Calu3 (cell line): ENCODE measurements at regions of chr6 and their contacts with region 1.

Region 1: DNA sequence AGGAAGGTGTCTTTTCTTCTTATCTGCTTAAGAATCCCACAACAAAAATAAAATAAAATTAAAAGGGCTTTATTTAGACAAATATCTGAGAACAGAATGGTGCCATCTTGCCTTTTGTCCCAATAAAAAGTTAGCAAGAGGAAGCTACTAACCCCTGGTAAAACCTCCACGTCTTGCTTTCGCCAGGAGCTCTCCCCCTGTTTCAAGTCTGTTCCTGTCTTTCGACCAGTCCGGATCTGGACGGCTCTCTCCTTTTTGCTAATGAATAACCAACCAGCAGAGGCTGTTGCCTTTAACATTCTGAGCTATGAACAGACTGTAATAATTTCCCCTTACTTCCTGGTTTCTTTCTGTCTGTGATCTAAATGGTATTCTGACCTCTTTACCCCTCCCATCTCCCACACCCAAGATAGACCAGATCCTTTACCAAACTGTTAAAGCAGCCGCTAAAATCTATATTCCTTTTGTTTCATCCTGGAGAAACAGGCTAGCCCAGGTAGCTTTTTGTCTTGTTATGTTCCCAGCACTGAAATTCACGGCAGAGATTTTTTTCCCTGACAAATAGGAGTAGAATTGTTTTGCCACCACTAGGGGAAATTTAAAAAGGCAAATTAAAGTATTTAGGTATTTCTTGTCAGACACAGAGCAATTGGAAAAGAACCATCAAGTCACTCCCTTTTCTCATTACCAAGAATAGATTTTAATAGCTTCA is at the start of gene FRK:
- DNase-seq: peak; percentile 77
- H3K4me3 Mint-ChIP-seq: peak within 1 kb of the TSS; percentile 72
- H3K27ac Mint-ChIP-seq: peak within 1 kb of the TSS; percentile 89
- H3K4me1 Mint-ChIP-seq: peaks cover 13% of the 10 kb centered on the region
- H3K27me3 Mint-ChIP-seq: no peaks in the 10 kb centered on the region
- CTCF ChIP-seq: no peak
- total RNA-seq, gene FRK: 21.1 and 21.2 TPM in 2 replicates

Region 2: GRCh38 chr6:116010790-116011401 is 49.8 kb before region 1 on chr6:
- CTCF ChIA-PET with region 1: interaction called, 25 read pairs
- intact Hi-C with region 1: loop called (anchors 1 kb)
- DNase-seq: peak; percentile 78
- H3K4me3 Mint-ChIP-seq: peak overlapping the region; percentile 48
- H3K27ac Mint-ChIP-seq: peak overlapping the region; percentile 98
- H3K4me1 Mint-ChIP-seq: peaks cover 63% of the 10 kb centered on the region
- H3K27me3 Mint-ChIP-seq: no peaks in the 10 kb centered on the region
- CTCF ChIP-seq: peak; percentile 77

Region 3: DNA sequence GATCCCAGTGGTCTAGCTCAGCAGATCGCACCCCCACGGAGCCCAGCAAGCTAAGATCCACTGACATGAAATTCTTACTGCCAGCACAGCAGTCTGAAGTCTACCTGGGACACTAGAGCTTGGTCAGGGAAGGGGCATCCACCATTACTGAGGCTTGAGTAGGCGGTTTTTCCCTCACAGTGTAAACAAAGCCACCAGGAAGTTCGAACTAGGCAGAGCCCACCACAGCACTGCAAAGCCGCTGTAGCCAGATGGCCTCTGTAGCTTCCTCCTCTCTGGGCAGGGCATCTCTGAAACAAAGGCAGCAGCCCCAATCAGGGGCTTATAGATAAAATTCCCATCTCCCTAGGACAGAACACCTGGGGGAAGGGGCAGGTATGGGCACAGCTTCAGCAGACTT is 18.8 kb before region 1 on chr6:
- CTCF ChIA-PET with region 1: interaction called, 11 read pairs
- intact Hi-C with region 1: loop called (anchors 2 kb)
- DNase-seq: no peak
- H3K4me3 Mint-ChIP-seq: peak overlapping the region; percentile 25
- H3K27ac Mint-ChIP-seq: peak overlapping the region; percentile 37
- H3K4me1 Mint-ChIP-seq: peaks cover 52% of the 10 kb centered on the region
- H3K27me3 Mint-ChIP-seq: no peaks in the 10 kb centered on the region
- CTCF ChIP-seq: no peak

Region 4: DNA sequence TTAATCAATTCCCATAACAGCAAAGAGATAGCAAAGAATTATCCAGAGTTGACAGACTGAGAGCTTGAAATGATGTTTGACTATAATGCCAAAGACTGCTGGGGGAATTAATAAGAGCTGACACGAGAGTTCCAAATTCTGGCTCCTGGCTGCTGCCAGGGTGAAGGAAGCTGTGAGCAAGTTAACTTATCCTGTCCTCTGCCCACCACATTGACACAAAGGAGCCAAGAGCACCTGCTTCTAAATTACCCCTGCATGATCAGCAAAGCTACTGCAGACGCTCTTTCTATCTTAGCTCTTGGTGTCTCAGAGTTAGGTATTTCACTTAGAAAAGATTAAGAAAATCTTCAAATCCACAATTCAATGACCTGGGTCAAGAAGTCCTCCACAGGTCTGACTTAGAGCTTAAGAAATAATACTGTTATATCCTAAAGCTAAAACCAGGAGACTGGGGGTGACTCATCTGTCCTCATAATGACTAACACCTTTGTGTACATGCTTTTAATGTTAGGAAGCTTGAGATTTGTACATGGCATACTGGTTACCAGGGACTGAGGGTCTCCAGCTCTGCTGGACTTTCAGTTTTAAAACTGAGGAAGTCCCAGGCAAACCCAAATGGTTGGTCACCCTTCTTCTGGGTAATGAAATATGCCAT is 13.2 kb after region 1 on chr6:
- CTCF ChIA-PET with region 1: interaction called, 15 read pairs
- intact Hi-C with region 1: no loop called
- DNase-seq: no peak
- H3K4me3 Mint-ChIP-seq: peak overlapping the region; percentile 15
- H3K27ac Mint-ChIP-seq: peak overlapping the region; percentile 57
- H3K4me1 Mint-ChIP-seq: peaks cover 42% of the 10 kb centered on the region
- H3K27me3 Mint-ChIP-seq: no peaks in the 10 kb centered on the region
- CTCF ChIP-seq: no peak

Region 5: DNA sequence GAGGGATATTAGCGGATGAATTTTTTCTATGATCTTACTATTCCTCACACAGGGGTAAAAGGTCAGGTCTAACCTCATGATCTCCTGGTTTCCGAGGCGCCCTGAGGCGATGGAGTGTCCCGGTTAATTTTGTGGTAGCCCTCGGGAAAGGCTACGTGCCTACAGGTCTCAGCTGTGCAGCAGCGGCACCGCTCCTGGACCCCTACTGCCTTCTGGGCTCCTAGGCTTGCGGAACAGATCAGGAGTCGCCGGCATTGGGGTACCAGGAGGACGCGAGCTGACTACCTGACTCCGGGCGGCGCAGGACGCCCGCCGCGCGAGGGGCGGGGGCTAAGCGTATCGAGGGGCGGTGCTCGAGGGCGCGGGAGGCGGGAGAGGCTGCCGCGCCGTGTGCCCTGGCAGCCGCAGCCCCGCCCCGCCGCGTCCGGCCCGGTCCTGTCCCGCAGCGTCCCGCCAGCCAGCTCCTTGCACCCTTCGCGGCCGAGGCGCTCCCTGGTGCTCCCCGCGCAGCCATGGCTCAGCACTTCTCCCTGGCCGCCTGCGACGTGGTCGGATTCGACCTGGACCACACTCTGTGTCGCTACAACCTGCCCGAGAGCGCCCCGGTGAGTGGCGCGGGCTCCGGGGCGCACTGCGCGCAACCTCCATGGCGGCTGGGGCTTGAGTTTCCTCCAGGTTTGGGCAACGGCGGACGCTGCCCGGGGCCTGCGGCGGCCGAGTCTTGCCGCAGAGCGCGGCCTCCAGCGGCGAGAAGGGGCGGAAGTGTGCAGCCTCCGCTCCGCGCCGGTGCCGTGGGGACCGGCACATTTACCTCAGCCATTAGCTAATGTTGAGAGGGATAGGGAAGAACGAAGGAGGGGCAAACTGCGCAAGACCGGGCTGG is 39.9 kb after region 1 on chr6 and contains the start of gene NT5DC1:
- CTCF ChIA-PET with region 1: interaction called, 7 read pairs
- intact Hi-C with region 1: loop called (anchors 2 kb)
- DNase-seq: peak; percentile 91
- H3K4me3 Mint-ChIP-seq: peak within 1 kb of the TSS; percentile 92
- H3K27ac Mint-ChIP-seq: peak within 1 kb of the TSS; percentile 72
- H3K4me1 Mint-ChIP-seq: peaks cover 59% of the 10 kb centered on the region
- H3K27me3 Mint-ChIP-seq: no peaks in the 10 kb centered on the region
- CTCF ChIP-seq: peak; percentile 26
- total RNA-seq, gene NT5DC1: 45.2 and 61.9 TPM in 2 replicates